Activated CD4-positive, alpha-beta memory T cell treated with anti-CD3 and anti-CD28 coated beads, Interleukin-2, amount 10 ng/mL, durations not matched to agents 7 days and 5 days (primary cell): ENCODE measurements at regions of chr19 and their contacts with region 1.

Region 1: DNA sequence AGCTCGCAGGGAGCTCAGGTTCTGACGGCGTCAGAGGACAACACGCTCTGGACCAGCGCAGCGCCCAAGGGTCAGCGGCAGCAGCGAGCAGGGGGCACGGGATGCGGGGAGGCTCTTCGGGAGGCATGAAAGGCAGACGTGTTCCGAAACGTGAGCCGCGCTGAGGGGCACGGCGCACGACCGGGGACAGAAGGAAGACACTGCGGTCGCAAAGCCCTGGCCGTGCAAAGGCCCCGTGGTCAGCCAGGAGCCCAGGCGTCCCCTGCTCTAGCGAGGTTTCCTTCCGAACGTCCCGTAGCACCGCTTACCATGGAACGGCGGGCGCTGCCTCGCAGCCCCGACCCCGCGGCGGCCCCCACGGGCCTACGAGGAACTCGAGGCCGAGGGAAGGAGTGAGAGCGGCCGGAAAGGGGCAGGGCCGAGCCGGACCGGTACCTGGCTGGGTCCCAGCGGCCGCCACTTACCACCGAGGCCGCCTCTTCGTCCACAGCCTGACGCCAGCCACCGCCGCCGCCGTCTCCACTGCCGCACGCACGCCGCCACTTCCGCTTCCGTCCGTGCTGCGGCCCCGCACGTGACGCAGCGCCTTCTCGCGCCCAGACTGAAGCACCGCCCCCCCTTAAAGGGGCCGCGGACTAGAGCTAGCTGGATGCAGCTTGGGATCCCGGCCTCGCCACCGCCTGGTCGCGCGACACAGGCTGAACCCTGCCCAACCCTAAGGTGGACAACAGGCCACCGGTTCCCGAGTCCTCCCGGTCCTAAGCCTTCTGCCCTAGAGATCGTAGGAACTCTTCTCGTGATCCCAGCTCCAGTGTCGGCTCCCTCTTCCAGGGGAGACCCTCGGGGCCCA is 9.4 kb downstream of the ABHD17A start:
- DNase-seq: peak; percentile 92
- H3K4me3 Mint-ChIP-seq: peak overlapping the region; percentile 99
- H3K27ac Mint-ChIP-seq: peak overlapping the region; percentile 99
- H3K4me1 Mint-ChIP-seq: peaks cover 28% of the 10 kb centered on the region
- H3K27me3 Mint-ChIP-seq: no peaks in the 10 kb centered on the region

Region 2: GRCh38 chr19:1855040-1855827 is 20.6 kb before region 1 on chr19:
- CTCF ChIA-PET with region 1: interaction called, 3 read pairs
- POLR2A ChIA-PET with region 1: interaction called, 11 read pairs
- DNase-seq: peak; percentile 96
- H3K4me3 Mint-ChIP-seq: peak overlapping the region; percentile 80
- H3K27ac Mint-ChIP-seq: peak overlapping the region; percentile 96
- H3K4me1 Mint-ChIP-seq: peaks cover 59% of the 10 kb centered on the region
- H3K27me3 Mint-ChIP-seq: no peaks in the 10 kb centered on the region

Region 3: DNA sequence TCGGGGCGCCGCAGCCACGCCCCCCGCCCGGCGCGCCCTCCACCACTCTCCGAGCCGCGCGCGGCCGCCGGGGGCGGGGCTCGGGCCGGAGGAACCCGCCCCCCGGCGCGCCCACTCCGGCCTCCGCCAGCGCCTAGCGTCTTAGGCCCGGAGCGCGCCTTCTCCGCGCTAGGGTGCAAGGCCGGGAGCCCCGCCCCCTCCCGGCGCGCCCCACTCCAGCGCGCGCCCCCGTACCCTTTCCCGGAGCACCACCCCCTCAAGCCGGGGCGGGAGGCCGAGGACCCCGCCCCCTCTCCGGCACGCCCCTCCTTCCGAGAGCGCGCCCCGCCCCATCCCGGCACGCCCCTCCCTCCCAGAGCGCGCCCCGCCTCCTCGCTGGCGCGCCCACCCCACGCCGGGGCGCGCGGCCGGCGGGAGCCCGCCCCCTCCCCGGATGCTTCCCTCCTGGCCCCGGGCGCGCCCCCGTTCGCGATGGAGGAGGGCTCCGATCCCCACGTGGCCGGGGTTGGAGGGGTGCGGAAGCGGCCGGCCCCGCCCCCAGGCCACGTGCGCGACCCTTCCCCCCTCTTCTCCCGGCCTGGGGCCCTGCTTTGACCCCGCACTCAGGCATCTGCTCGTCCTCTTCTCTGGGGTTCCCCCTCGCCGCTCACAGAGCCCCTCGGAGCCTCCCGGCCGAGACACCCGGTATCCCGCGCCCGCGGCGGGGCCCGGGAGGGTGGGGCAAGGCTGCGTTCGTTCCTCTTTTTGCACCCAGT is 12.0 kb before region 1 on chr19:
- CTCF ChIA-PET with region 1: interaction called, 39 read pairs
- POLR2A ChIA-PET with region 1: interaction called, 12 read pairs
- DNase-seq: peak; percentile 93
- H3K4me3 Mint-ChIP-seq: peak overlapping the region; percentile 74
- H3K27ac Mint-ChIP-seq: peak overlapping the region; percentile 77
- H3K4me1 Mint-ChIP-seq: peaks cover 44% of the 10 kb centered on the region
- H3K27me3 Mint-ChIP-seq: no peaks in the 10 kb centered on the region

Region 4: DNA sequence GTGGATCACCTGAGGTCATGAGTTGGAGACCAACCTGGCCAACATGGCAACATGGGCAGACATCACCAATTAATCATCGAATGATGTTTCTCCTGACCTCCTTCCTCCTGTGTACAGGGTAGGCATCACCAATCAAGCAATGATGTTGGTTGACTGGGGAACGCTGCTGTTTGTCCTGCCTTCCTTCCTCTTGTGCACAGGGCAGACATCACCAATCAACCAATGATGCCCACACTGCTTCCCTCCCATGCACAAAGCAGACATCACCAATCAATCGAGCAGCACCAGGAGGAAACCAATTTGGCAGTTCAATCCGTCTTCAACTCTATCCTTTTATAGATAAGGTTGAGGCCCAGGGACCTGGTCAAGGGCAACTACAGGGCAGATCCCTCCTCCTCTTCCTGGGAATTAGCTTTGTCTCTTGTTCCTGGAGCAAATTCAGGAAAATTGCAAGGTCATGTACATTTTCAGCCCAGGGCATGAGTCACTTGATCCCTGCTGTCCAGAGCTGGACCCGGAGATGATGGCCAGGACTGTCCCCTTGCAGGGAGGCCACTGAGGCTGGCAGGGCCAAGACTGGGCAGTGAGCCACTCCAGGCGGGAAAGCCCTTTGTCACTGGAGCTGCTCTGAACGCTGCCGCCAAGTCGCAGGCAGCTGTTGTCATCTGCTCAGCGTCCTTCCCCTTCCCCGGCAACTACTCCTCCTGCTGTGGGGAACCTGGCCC is 59.8 kb after region 1 on chr19:
- CTCF ChIA-PET with region 1: no interaction called
- POLR2A ChIA-PET with region 1: no interaction called
- DNase-seq: peak; percentile 45
- H3K4me3 Mint-ChIP-seq: no peak overlapping the region
- H3K27ac Mint-ChIP-seq: no peak overlapping the region
- H3K4me1 Mint-ChIP-seq: peaks cover 40% of the 10 kb centered on the region
- H3K27me3 Mint-ChIP-seq: no peaks in the 10 kb centered on the region